MCF 10A (cell line): ENCODE measurements at regions of chr10 and their contacts with region 1.

Region 1: DNA sequence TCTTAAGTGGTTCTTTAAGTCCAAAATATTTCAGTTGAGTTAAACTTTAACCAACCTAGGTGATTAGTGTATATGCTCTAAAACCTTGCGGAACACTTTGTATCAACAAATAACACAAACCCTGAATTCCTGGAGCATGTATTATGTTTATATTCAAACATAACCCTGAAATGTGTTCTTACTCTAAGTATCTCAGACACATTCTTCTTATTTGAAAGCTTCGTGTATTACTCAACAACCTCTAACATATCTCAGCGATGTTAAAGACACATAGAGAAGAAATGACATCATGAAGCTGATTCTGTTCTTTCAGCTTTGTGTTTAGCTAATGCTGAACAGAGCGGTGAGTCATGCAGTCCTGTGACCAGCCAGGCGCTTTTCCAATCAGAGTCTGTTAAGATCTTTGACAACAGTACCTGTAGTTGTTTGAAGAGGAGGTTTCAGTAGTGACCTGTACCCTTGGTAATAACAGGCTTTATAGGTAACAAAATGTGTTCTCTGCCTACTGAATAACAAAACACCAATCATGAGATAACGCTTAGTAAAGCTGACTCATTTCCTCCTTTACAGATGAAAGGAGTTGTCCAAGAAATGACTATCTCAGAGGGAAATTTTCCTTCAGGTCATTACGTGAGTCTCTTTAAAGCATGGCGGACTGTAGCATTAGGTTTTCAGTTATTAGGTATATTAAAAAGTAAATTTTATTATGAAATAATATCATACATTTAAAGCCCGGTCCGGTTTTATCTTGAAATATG is 67.3 kb upstream of the KLF6 start:
- DNase-seq: peak; percentile 94
- H3K4me3 Mint-ChIP-seq: peak overlapping the region; percentile 54
- H3K27ac Mint-ChIP-seq: peak overlapping the region; percentile 98
- H3K4me1 Mint-ChIP-seq: peaks cover 33% of the 10 kb centered on the region
- H3K27me3 Mint-ChIP-seq: no peaks in the 10 kb centered on the region
- CTCF ChIP-seq: no peak

Region 2: GRCh38 chr10:3763035-3763456 is 89.3 kb before region 1 on chr10:
- CTCF ChIA-PET with region 1: no interaction called
- POLR2A ChIA-PET with region 1: interaction called, 11 read pairs
- intact Hi-C with region 1: no loop called
- DNase-seq: peak; percentile 97
- H3K4me3 Mint-ChIP-seq: peak overlapping the region; percentile 75
- H3K27ac Mint-ChIP-seq: peak overlapping the region; percentile 84
- H3K4me1 Mint-ChIP-seq: peaks cover 40% of the 10 kb centered on the region
- H3K27me3 Mint-ChIP-seq: no peaks in the 10 kb centered on the region
- CTCF ChIP-seq: no peak

Region 3: GRCh38 chr10:3828404-3829155 is 23.7 kb before region 1 on chr10:
- CTCF ChIA-PET with region 1: no interaction called
- POLR2A ChIA-PET with region 1: interaction called, 124 read pairs
- intact Hi-C with region 1: loop called (anchors 2 kb)
- DNase-seq: peak; percentile 55
- H3K4me3 Mint-ChIP-seq: peak overlapping the region; percentile 52
- H3K27ac Mint-ChIP-seq: peak overlapping the region; percentile 69
- H3K4me1 Mint-ChIP-seq: peaks cover 25% of the 10 kb centered on the region
- H3K27me3 Mint-ChIP-seq: no peaks in the 10 kb centered on the region
- CTCF ChIP-seq: no peak

Region 4: GRCh38 chr10:3887885-3888476 is 35.7 kb after region 1 on chr10:
- CTCF ChIA-PET with region 1: interaction called, 4 read pairs
- POLR2A ChIA-PET with region 1: interaction called, 89 read pairs
- intact Hi-C with region 1: loop called (anchors 5 kb)
- DNase-seq: peak; percentile 77
- H3K4me3 Mint-ChIP-seq: no peak overlapping the region
- H3K27ac Mint-ChIP-seq: peak overlapping the region; percentile 81
- H3K4me1 Mint-ChIP-seq: peaks cover 32% of the 10 kb centered on the region
- H3K27me3 Mint-ChIP-seq: no peaks in the 10 kb centered on the region
- CTCF ChIP-seq: no peak

Region 5: DNA sequence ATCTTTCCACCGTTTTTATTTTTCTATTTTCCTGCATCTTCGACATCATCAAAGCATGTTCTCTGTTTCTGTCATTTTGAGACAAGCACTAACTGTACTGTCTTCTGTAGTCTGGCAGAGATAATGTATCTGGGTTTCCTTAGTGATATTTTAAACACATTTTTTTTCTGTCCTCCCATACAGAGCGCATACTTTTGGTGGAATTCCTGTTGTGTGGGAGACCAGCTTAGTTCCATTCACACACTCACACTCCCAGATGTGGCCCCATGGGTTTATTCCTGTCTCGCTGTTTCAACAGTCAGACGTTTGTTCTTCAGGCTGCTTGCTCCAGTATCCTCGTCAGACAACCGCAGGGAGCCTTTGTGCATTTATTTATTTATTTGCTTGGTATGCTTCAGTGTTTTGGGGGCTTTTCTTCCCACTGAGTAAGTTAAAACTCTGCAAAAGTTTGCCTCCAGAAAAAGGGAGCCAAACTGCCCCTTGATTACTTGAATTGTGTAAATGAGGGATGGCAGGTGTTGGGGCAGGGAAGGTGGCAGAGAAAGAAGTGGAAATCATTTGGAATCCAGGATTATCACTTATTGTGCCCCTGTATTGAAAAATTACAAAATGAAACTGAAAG is 389.5 kb after region 1 on chr10:
- CTCF ChIA-PET with region 1: interaction called, 3 read pairs
- POLR2A ChIA-PET with region 1: interaction called, 4 read pairs
- intact Hi-C with region 1: loop called (anchors 5 kb)
- DNase-seq: no peak
- H3K4me3 Mint-ChIP-seq: no peak overlapping the region
- H3K27ac Mint-ChIP-seq: peak overlapping the region; percentile 77
- H3K4me1 Mint-ChIP-seq: peaks cover 43% of the 10 kb centered on the region
- H3K27me3 Mint-ChIP-seq: no peaks in the 10 kb centered on the region
- CTCF ChIP-seq: no peak

Region 6: GRCh38 chr10:4767033-4767814 is 914.9 kb after region 1 on chr10:
- CTCF ChIA-PET with region 1: interaction called, 5 read pairs
- POLR2A ChIA-PET with region 1: interaction called, 9 read pairs
- intact Hi-C with region 1: loop called (anchors 2 kb)
- DNase-seq: peak; percentile 57
- H3K4me3 Mint-ChIP-seq: no peak overlapping the region
- H3K27ac Mint-ChIP-seq: peak overlapping the region; percentile 76
- H3K4me1 Mint-ChIP-seq: peaks cover 31% of the 10 kb centered on the region
- H3K27me3 Mint-ChIP-seq: no peaks in the 10 kb centered on the region
- CTCF ChIP-seq: peak; percentile 78